ENCODE measurements at regions of chr7 and their contacts with region 1.

Region 1: DNA sequence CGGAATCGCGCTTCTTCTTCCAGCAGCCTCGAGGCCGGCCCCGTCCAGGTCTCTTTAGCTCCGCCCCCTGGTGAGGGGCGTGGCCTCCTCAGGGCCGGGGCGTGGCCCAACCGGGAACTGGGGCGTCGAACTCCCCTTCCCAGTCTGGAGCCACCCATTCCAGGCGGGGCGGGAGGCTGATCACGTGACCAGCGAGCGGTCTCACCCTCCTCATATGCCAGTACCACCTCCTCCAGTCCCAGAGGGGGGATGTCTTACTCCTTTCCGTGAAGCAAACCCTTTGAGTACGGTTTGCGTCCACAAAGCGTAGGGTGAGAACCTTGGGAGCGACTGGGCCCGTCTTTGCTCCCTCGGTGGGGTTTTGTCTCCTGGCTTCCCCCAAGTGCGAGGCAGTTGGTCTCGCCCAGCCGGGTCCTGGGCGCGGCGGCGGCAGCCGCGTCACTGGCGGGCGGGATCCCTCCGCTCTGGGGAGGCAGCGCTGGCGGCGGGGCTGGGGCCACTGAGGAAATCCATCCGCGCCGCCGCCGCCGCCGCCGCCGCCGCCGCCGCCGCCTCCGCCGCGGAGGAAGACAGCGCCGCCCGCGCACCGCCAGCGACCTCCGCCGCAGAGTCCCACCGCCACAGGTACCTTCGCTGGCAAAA is at the start of gene GNB2:
- DNase-seq: peak; percentile 91 to 99 (median 97)
- ATAC-seq: peak; percentile 51
- H3K4me3 ChIP-seq: peak within 1 kb of the TSS; percentile 94
- H3K4me3 Mint-ChIP-seq: peak within 1 kb of the TSS; percentile 99
- H3K27ac ChIP-seq: peak within 1 kb of the TSS; percentile 89 to 94
- H3K27ac Mint-ChIP-seq: peak within 1 kb of the TSS; percentile 92
- H3K4me1 ChIP-seq: peaks cover 33% of the 10 kb centered on the region
- H3K4me1 Mint-ChIP-seq: peaks cover 22% of the 10 kb centered on the region
- H3K27me3 ChIP-seq: no peaks in the 10 kb centered on the region
- H3K27me3 Mint-ChIP-seq: no peaks in the 10 kb centered on the region
- CTCF ChIP-seq: no peak
- total RNA-seq, gene GNB2: 87.8 to 91.9 TPM

Region 2: GRCh38 chr7:100478966-100479665 is 194.3 kb before region 1 on chr7 and contains the start of gene TSC22D4:
- CTCF ChIA-PET with region 1: interaction called, 3 read pairs
- POLR2A ChIA-PET with region 1: interaction called, 3 read pairs
- intact Hi-C with region 1: loop called in 1 of 2 experiments (anchors 5 kb)
- DNase-seq: peak; percentile 85 to 97 (median 93)
- ATAC-seq: peak; percentile 75
- H3K4me3 ChIP-seq: peak within 1 kb of the TSS; percentile 100
- H3K4me3 Mint-ChIP-seq: peak within 1 kb of the TSS; percentile 97
- H3K27ac ChIP-seq: peak within 1 kb of the TSS; percentile 73 to 84
- H3K27ac Mint-ChIP-seq: peak within 1 kb of the TSS; percentile 83
- H3K4me1 ChIP-seq: peaks cover 70% of the 10 kb centered on the region
- H3K4me1 Mint-ChIP-seq: peaks cover 49% of the 10 kb centered on the region
- H3K27me3 ChIP-seq: no peaks in the 10 kb centered on the region
- H3K27me3 Mint-ChIP-seq: no peaks in the 10 kb centered on the region
- CTCF ChIP-seq: no peak
- total RNA-seq, gene TSC22D4: 34.6 to 36.5 TPM

Region 3: DNA sequence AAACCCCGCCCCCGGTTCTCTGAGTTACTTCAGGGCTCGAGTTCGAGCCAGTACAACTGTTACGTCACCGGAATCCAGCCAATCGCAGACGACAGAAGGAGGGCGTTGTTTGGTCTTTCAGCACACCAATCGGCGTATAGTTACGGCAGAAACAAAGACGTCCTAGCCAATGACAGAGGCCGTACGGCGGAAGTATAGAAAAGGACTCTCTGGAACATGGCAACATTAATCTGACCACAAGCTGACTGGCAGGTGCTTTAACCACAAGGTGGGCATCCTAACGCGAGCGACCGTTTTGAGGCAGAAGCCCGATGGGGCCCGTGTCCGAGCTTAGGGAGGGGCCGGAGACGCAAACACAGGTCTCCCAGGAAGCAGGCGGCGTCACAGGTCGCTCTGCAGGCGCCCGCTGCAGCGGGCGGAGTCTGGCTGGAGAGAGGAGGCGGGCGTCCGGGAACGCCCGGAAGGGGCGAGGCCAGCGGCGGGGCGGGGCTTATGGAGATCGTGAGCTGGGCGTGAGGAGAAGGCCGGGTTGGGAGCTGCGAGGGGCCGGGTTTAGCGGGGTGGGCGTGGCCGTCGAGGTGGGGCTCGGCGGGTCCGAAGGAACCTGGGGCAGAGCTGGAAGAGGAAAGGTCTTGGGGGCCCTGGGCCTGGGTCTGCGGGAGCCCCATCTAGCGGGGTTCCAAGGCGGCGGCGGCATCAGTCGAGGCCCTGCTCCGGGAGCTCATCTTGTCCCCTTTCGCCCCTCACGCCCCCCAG is 61.3 kb before region 1 on chr7 and contains the start of gene MOSPD3:
- CTCF ChIA-PET with region 1: interaction called, 3 read pairs
- POLR2A ChIA-PET with region 1: interaction called, 26 read pairs
- intact Hi-C with region 1: loop called (anchors 1 to 2 kb)
- DNase-seq: peak; percentile 95 to 99 (median 98)
- ATAC-seq: peak; percentile 87
- H3K4me3 ChIP-seq: peak within 1 kb of the TSS; percentile 62
- H3K4me3 Mint-ChIP-seq: peak within 1 kb of the TSS; percentile 94
- H3K27ac ChIP-seq: peak within 1 kb of the TSS; percentile 78 to 92
- H3K27ac Mint-ChIP-seq: peak within 1 kb of the TSS; percentile 97
- H3K4me1 ChIP-seq: peaks cover 27% of the 10 kb centered on the region
- H3K4me1 Mint-ChIP-seq: peaks cover 31% of the 10 kb centered on the region
- H3K27me3 ChIP-seq: no peaks in the 10 kb centered on the region
- H3K27me3 Mint-ChIP-seq: no peaks in the 10 kb centered on the region
- CTCF ChIP-seq: no peak
- total RNA-seq, gene MOSPD3: 8.5 to 10.9 TPM

Region 4: GRCh38 chr7:100632951-100633717 is 40.3 kb before region 1 on chr7:
- CTCF ChIA-PET with region 1: interaction called, 4 read pairs
- POLR2A ChIA-PET with region 1: interaction called, 5 read pairs
- intact Hi-C with region 1: loop called (anchors 2 to 5 kb)
- DNase-seq: peak; percentile 26 to 81 (median 47)
- ATAC-seq: peak; percentile 77
- H3K4me3 ChIP-seq: peak overlapping the region; percentile 71
- H3K4me3 Mint-ChIP-seq: peak overlapping the region; percentile 87
- H3K27ac ChIP-seq: no peak overlapping the region
- H3K27ac Mint-ChIP-seq: no peak overlapping the region
- H3K4me1 ChIP-seq: peaks cover 24% of the 10 kb centered on the region
- H3K4me1 Mint-ChIP-seq: peaks cover 10% of the 10 kb centered on the region
- H3K27me3 ChIP-seq: no peaks in the 10 kb centered on the region
- H3K27me3 Mint-ChIP-seq: no peaks in the 10 kb centered on the region
- CTCF ChIP-seq: peak; percentile 33